ENCODE measurements at regions of chr2 and their contacts with region 1.

Region 1: GRCh38 chr2:200703127-200703925 is 108.4 kb upstream of the BZW1 start:
- DNase-seq: peak; percentile 80
- H3K4me3 Mint-ChIP-seq: peak overlapping the region; percentile 23
- H3K27ac Mint-ChIP-seq: peak overlapping the region; percentile 78
- H3K4me1 Mint-ChIP-seq: peaks cover 28% of the 10 kb centered on the region
- H3K27me3 Mint-ChIP-seq: no peaks in the 10 kb centered on the region

Region 2: DNA sequence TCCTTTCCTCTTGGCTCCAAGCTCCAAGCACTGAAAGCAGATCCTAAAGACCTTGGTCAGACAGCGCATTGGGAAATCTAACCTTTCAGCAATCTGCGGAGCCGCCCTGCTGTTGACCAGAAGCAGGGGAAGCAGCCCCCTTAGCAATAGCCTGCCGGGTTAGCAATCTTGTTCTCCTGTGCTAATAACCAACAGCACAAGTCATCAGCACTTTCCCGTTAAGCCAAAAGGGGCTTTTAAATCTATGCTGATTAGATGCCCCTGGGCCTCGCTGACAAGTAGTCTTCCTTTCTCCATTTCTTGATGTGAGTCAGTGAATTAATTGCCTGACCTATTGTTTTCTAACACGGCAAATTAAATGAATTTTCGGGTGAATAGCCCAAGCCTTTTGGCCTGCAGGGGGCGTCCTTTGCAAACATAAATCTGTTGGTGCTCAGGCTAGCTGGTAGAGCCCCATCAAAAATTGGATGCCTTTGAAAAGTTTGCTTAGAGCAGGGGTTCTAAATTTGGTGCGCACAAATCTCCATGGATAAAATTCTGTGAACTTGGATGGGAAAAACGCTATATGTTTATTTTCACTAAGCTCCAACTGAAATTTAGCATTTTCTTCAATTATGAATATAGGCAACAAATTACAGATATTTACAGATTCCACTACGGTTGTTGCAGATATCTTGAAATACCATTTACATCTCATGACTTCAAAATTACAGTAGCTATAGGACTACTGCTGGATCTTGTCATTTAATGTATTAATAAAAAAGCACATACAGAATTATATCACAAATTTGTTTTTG is 723.3 kb before region 1 on chr2:
- intact Hi-C with region 1: loop called (anchors 2 kb)
- DNase-seq: peak; percentile 94
- H3K4me3 Mint-ChIP-seq: no peak overlapping the region
- H3K27ac Mint-ChIP-seq: no peak overlapping the region
- H3K4me1 Mint-ChIP-seq: peaks cover 23% of the 10 kb centered on the region
- H3K27me3 Mint-ChIP-seq: no peaks in the 10 kb centered on the region

Region 3: GRCh38 chr2:200578778-200579177 is 124.5 kb before region 1 on chr2:
- intact Hi-C with region 1: loop called (anchors 1 kb)
- DNase-seq: no peak
- H3K4me3 Mint-ChIP-seq: no peak overlapping the region
- H3K27ac Mint-ChIP-seq: peak overlapping the region; percentile 3
- H3K4me1 Mint-ChIP-seq: peaks cover 16% of the 10 kb centered on the region
- H3K27me3 Mint-ChIP-seq: no peaks in the 10 kb centered on the region

Region 4: DNA sequence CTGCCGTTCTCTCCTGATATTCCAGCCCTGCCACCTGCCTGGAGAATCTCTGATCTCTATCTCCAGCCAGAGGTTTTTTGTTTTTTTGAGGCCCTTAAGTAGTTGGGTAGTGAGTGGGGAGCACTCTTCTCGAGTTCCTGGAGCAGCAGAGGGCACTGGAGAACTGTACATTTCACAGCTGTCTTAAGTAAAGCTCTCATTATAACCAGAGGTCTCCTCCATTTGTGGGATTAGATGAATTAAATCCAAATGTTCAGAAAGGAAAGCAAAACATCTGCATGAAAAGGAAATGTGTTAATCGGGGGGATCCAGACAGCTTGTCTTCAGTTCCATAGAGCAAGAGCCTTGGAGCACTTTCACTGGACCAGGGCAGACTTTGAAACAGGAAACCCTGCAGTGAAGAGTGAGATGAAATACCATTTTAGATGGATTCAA is 84.7 kb before region 1 on chr2:
- intact Hi-C with region 1: loop called (anchors 5 kb)
- DNase-seq: no peak
- H3K4me3 Mint-ChIP-seq: no peak overlapping the region
- H3K27ac Mint-ChIP-seq: no peak overlapping the region
- H3K4me1 Mint-ChIP-seq: peaks cover 11% of the 10 kb centered on the region
- H3K27me3 Mint-ChIP-seq: no peaks in the 10 kb centered on the region

Region 5: DNA sequence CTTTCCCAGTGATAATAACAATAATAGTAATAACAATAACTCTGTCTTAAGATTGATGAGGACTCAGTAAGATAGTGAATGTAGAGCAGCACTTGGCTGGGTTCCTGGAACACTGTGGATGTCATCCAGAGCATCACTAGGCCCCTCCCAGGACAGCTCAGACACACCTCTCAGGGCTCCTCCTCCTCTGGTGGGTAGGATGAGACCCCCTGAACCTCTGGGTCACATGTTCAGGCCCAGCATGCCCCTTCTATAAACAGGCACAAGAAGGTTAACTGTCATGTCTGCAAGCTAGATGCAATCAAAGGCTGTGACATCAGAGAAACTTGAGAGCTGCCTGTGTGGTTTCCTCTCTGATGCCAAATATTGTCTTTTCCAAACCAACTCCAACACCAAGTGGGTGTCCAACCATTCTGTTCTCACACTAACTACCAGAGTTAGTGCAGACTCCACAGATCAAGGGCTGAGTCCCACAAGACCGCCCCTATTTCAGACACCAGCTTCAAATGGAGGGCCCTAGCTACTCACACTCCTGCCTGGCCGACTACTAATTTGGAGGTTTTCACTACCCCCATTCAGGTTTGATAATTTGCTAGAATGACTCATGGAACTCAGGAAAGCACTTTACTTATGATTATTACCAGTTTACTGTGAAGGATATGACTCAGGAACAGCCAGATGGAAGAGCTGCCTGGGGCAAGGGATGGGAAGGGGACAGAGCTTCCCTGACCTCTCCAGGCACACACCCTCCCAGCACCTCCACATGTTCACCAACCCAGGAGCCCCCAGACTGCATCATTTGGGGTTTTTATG is 62.0 kb after region 1 on chr2:
- intact Hi-C with region 1: loop called (anchors 1 kb)
- DNase-seq: peak; percentile 68
- H3K4me3 Mint-ChIP-seq: peak overlapping the region; percentile 39
- H3K27ac Mint-ChIP-seq: peak overlapping the region; percentile 90
- H3K4me1 Mint-ChIP-seq: peaks cover 27% of the 10 kb centered on the region
- H3K27me3 Mint-ChIP-seq: no peaks in the 10 kb centered on the region

Measured in activated CD4-positive, alpha-beta T cell treated with anti-CD3 and anti-CD28 coated beads, Interleukin-2, amount 10 ng/mL, durations not matched to agents 24 days and 14 days (primary cell).